ENCODE measurements at regions of chr13 and their contacts with region 1.

Region 1: DNA sequence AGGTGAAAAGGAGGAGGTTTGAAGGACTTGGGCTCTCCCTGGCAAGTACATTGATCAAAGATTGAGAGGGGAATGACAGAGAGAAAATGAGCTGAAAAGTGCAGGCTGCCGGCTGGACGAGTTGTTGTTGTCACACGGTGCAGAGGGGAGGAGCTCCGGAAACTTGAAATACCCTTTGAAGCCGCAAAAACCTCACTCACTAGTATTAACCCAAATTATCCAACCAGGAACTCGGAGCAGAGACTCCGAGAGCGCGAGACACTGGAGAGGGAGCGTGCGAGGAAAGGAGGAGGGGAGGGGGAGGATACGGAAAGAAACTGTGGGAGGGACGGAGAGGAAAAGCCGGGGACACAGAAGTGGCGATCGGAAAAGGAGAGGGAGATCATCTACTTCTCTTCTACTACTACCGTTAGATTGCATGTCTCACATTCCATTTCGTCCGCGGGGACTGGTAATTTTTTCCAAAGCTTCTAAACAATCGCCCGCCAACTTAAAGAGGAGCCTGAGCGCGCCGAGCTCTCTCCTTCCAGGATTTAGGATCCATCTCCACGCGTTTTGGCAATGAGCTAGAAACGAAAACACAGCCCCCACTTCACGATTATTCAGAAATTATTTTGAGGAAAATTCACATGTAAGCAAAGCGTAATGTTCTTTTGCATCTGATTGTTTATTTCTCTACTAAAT is at the start of gene DACH1:
- DNase-seq: peak; percentile 49 to 66 (median 62)
- H3K4me3 ChIP-seq: peak within 1 kb of the TSS; percentile 81 to 96 (median 95)
- H3K4me3 Mint-ChIP-seq: peak within 1 kb of the TSS; percentile 100
- H3K27ac ChIP-seq: peak within 1 kb of the TSS in 1 of 2 donors; percentile 69
- H3K27ac Mint-ChIP-seq: peak within 1 kb of the TSS; percentile 65 to 92 (median 85)
- H3K4me1 ChIP-seq: peaks cover 8 to 18% of the 10 kb centered on the region in 2 donors
- H3K4me1 Mint-ChIP-seq: peaks cover 40% of the 10 kb centered on the region
- H3K27me3 ChIP-seq: peaks cover 6 to 23% of the 10 kb centered on the region in 2 donors
- H3K27me3 Mint-ChIP-seq: peaks cover 12 to 23% (median 23%) of the 10 kb centered on the region in 3 donors
- CTCF ChIP-seq: no peak
- polyA plus RNA-seq, gene DACH1: 0.03 to 0.69 (median 0.26) TPM

Region 2: DNA sequence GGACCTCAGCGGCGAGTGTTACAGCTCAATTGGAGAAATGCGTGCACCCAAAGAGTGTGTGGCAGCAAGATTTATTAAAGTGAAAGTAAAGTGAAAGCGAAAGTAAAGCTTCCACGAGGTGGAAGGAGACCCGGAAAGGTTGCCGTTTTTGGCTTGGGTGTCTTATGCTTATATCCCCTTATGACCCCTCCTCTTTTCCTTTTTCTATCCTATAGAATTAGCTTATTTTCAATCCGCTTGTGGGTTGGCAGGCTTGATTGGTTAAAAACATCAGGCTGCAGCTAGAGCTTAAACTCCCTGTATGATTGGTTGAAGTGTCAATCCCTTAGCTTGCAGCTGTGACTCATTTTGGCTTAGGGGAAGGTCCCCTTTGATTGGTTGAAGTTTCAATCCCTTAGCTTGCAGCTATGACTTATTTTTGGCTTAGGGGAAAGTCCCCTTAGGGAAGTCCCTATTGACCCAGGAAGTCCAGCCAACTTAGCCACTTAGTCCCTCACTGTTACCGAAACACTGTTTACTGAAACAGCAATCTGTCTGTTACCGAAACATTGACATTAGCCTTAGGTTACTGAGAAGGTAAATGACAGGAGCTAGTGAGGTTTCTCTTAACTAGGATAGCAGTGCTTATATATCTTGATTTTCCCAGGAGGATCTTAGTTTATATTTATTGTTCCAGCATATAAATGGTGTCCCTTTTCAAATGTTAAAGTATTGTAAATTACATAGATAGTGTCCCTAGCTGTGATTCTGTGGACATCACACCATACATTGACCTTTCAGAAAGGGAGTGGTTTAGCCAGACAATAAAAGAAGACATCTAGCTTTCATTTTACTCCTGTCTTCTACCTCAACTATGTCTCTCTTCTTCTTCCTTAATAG is 576.1 kb before region 1 on chr13:
- intact Hi-C with region 1: loop called in 1 of 2 experiments (anchors 10 kb)
- DNase-seq: peak; percentile 89 to 97 (median 96)
- H3K4me3 ChIP-seq: peak overlapping the region; percentile 50 to 87 (median 73)
- H3K4me3 Mint-ChIP-seq: peak overlapping the region; percentile 76 to 92
- H3K27ac ChIP-seq: peak overlapping the region; percentile 38 to 89
- H3K27ac Mint-ChIP-seq: peak overlapping the region; percentile 90 to 96 (median 93)
- H3K4me1 ChIP-seq: peaks cover 3 to 6% of the 10 kb centered on the region in 2 donors
- H3K4me1 Mint-ChIP-seq: peaks cover 7% of the 10 kb centered on the region
- H3K27me3 ChIP-seq: no peaks in the 10 kb centered on the region
- H3K27me3 Mint-ChIP-seq: peaks cover 0 to 3% (median 0%) of the 10 kb centered on the region in 3 donors
- CTCF ChIP-seq: no peak

Region 3: DNA sequence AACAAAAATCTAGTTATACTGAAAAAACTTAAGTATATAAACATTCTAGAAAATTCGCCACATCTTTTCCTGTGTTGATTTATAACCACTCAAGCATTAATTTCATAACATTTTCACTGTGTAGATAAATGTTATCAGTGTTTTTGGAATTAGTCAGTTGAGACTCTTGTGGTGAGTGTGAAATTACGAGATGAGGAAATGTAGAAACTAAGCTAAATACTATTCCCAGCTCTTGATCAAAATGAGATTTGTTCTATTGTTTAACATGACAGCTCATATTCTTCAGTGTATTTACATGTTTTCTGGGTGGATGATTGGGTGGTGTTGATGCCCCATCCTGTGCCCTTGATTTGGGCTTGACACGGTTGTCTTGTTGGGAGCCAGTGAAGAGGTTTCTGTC is 407.1 kb before region 1 on chr13:
- intact Hi-C with region 1: no loop called
- DNase-seq: no peak
- H3K4me3 ChIP-seq: no peak overlapping the region
- H3K4me3 Mint-ChIP-seq: no peak overlapping the region
- H3K27ac ChIP-seq: no peak overlapping the region
- H3K27ac Mint-ChIP-seq: no peak overlapping the region
- H3K4me1 ChIP-seq: no peaks in the 10 kb centered on the region
- H3K4me1 Mint-ChIP-seq: no peaks in the 10 kb centered on the region
- H3K27me3 ChIP-seq: no peaks in the 10 kb centered on the region
- H3K27me3 Mint-ChIP-seq: no peaks in the 10 kb centered on the region
- CTCF ChIP-seq: no peak

Region 4: DNA sequence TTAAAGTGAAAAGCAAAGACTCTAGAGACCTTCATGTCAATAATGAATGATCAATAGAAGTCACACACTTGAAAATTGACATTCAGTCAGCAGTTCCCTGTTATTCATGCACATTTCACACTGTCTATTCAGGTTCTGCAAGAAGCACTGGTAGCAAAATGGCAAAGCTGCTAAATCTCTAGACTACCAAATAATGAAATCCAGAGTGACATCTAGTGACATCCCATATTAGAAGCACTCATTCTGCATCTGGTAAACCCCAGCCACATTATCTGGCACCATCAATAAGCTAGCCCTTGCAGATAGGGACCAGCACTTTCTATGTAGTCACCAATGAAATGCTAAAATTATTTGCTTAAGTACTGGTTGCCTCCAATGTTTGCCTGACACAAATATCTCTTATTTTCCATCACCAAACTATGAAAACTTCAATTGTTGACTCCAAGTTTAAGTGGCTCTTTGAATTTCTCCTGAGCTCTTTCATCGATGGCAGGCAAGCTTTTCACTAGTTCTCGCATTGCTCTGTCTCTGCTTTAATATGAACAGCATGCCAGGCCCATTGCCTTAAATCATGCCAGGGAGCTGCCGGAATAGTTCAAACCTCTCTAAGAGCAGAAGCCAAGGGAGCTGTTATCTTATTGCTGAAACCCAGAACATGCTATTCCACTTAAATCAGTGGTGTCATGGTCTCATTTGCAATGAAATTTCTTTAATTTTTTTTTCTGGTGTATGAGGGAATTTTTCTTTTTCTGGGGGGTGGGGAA is 450.3 kb after region 1 on chr13:
- intact Hi-C with region 1: no loop called
- DNase-seq: no peak
- H3K4me3 ChIP-seq: no peak overlapping the region
- H3K4me3 Mint-ChIP-seq: no peak overlapping the region
- H3K27ac ChIP-seq: no peak overlapping the region
- H3K27ac Mint-ChIP-seq: no peak overlapping the region
- H3K4me1 ChIP-seq: no peaks in the 10 kb centered on the region
- H3K4me1 Mint-ChIP-seq: no peaks in the 10 kb centered on the region
- H3K27me3 ChIP-seq: no peaks in the 10 kb centered on the region
- H3K27me3 Mint-ChIP-seq: peaks cover 0 to 2% (median 0%) of the 10 kb centered on the region in 3 donors
- CTCF ChIP-seq: no peak

Measured in CD14-positive monocyte (primary cell).